Activated CD4-positive, alpha-beta memory T cell treated with anti-CD3 and anti-CD28 coated beads for 36 hours (primary cell): ENCODE measurements at regions of chr7 and their contacts with region 1.

Region 1: DNA sequence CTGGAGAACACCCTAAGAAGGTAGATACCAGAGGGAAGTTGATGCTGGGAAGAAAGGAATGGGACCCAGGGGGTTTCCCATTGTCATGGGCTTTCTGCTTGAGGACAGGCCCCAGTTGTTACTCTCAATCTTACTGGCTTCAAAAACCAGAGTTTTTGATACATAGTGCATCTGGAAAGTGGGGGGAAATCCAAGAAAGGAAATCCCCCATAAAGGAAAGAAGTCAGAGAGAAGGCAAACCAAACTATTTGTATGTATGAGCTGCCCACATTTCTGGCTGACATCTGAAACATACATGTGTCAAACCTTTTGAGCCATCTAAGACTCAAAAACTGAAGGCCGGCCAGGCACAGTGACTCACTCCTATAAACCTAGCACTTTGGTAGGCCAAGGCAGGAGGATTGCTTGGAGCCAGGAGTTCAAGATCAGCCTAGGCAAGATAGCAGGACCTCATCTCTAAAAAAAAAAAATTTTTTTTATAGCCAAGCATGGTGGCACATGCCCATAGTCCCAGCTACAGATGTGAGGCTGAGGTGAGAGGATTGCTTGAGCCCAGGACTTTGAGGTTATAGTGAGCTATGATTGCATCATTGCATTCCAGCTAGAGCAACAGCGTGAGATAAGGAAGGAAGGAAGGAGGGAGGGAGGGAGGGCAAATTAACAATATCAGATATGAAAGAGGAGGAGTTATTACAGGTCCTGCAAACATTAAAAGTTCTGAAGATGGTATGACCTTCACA is 6.6 kb upstream of the COA1 start:
- DNase-seq: peak; percentile 76
- H3K4me3 Mint-ChIP-seq: no peak overlapping the region
- H3K27ac Mint-ChIP-seq: peak overlapping the region; percentile 49
- H3K4me1 Mint-ChIP-seq: peaks cover 22% of the 10 kb centered on the region
- H3K27me3 Mint-ChIP-seq: no peaks in the 10 kb centered on the region

Region 2: DNA sequence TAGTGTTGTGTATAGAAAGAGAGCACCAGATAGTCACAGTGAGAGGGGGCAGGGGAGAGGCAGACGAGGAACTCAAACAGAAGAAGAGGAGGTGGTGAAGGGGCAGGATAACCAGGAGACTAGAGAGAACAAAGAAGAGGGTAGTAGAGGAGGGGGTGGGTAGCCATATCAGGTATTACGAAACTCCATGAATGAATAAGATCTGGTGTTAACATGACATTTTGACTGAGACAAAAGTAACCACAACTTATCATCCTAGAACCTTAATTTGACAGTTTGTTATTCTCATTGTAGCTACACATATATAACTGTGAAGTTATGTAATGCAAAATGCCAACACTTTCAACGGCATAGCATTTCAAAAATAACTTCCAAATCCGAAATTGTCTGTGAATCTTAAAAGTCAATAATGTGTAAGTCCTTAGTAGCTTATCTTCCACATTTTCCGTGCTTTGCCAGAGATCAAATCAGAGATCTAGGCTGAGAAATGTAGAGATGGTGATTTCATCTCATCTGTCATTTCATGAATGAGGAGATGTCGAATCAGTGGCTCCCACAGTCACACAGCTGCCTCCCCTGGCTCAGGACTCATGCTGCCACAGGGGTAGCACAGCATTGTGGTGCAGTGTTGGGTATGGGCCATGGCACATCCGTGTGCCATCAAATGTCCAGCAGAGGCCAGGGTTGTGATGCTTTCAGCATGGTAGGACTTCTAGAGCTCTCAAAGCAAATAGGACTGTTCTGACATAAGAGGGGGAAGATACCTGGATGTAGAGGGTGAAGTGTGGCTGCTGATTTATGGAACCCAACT is 421.4 kb before region 1 on chr7:
- CTCF ChIA-PET with region 1: no interaction called
- POLR2A ChIA-PET with region 1: no interaction called
- intact Hi-C with region 1: loop called (anchors 10 kb)
- DNase-seq: peak; percentile 60
- H3K4me3 Mint-ChIP-seq: no peak overlapping the region
- H3K27ac Mint-ChIP-seq: no peak overlapping the region
- H3K4me1 Mint-ChIP-seq: peaks cover 18% of the 10 kb centered on the region
- H3K27me3 Mint-ChIP-seq: peaks cover 4% of the 10 kb centered on the region

Region 3: GRCh38 chr7:43750016-43750887 is 14.3 kb after region 1 on chr7:
- CTCF ChIA-PET with region 1: interaction called, 3 read pairs
- POLR2A ChIA-PET with region 1: interaction called, 19 read pairs
- intact Hi-C with region 1: loop called (anchors 1 kb)
- DNase-seq: no peak
- H3K4me3 Mint-ChIP-seq: no peak overlapping the region
- H3K27ac Mint-ChIP-seq: no peak overlapping the region
- H3K4me1 Mint-ChIP-seq: peaks cover 15% of the 10 kb centered on the region
- H3K27me3 Mint-ChIP-seq: peaks cover 10% of the 10 kb centered on the region

Region 4: DNA sequence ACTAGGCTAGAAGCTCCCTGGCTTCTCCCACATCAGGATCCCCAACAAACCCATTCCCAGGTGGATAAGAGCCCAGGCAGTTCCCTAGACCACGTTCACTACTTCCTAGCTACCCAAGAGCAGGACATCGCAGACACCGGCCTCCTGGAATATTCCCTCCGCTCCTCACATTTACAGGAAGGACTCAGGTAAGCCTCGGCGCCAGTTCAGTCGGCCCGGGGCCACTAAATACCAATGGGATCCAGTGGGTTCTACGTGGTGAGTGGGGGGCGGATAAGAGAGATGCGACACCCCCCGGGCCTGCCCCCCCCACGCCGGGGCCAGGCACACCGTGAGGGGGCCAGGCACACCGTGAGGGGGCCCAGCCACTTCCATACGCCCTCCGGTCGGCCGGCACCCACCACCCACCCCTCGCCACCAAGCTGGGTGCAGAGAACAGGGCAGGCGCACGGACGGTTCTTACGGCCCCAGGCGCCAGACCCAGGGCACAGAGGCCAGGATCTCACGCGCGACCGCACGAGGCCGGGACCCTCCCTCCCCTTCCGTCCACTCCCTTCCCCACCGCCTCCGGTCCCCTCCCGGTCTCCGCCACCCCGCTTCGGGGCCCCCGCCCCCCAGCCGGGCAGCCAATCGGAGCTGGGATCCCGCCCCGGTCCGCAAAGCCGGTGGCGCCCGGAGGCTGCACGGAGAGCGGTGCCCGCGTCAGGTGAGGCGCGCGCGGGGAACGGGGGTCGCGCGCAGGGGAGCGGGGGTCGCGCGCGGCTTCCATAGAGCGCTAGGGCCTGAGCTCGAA is 22.3 kb after region 1 on chr7 and contains the start of gene BLVRA:
- CTCF ChIA-PET with region 1: interaction called, 3 read pairs
- POLR2A ChIA-PET with region 1: interaction called, 6 read pairs
- intact Hi-C with region 1: loop called (anchors 1 kb)
- DNase-seq: peak; percentile 76
- H3K4me3 Mint-ChIP-seq: peak within 1 kb of the TSS; percentile 82
- H3K27ac Mint-ChIP-seq: no peak within 1 kb of the TSS
- H3K4me1 Mint-ChIP-seq: peaks cover 47% of the 10 kb centered on the region
- H3K27me3 Mint-ChIP-seq: peaks cover 13% of the 10 kb centered on the region
- total RNA-seq, gene BLVRA: 46.1 to 47.4 TPM